Gastrocnemius medialis (tissue), 4 donors: ENCODE measurements at regions of chr2 and their contacts with region 1.

Region 1: GRCh38 chr2:172179045-172179701 is 76.5 kb upstream of the DLX2 start:
- DNase-seq: no peak
- ATAC-seq: no peak
- H3K4me3 ChIP-seq: no peak overlapping the region
- H3K27ac ChIP-seq: no peak overlapping the region
- H3K4me1 ChIP-seq: no peaks in the 10 kb centered on the region
- H3K27me3 ChIP-seq: no peaks in the 10 kb centered on the region
- CTCF ChIP-seq: no peak
- POLR2A ChIP-seq: no peak

Region 2: GRCh38 chr2:172456002-172456401 is 276.8 kb after region 1 on chr2:
- in situ Hi-C with region 1: loop called (anchors 5 to 10 kb)
- intact Hi-C with region 1: no loop called
- DNase-seq: no peak
- ATAC-seq: no peak
- H3K4me3 ChIP-seq: no peak overlapping the region
- H3K27ac ChIP-seq: peak overlapping the region in 3 of 4 donors; percentile 9 to 52 (median 31)
- H3K4me1 ChIP-seq: peaks cover 8 to 40% of the 10 kb centered on the region in 2 donors
- H3K27me3 ChIP-seq: no peaks in the 10 kb centered on the region
- CTCF ChIP-seq: no peak
- POLR2A ChIP-seq: no peak